PC-3 (cell line): ENCODE measurements at regions of chr1 and their contacts with region 1.

Region 1: DNA sequence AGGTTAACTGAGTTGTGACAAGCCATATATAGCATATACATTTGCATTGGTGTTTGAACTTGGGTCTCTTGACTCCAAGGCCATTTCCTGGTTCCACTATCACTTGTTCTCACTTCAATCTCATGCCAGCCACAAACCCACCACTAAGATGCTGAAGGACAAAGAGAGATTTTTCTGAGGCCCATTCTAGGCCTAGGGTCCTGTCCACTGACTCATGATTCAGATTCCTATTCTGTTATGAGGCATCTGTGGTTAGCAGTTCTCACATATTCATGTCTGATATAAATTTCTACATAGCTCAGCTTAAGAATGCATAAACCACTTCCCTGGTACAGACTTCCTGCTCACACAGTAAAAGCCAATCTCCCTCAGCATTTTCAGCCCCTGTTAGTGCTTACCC is 326.1 kb upstream of the BEND5 start:
- DNase-seq: peak; percentile 83
- ATAC-seq: peak; percentile 79
- H3K4me3 ChIP-seq: no peak overlapping the region
- H3K27ac ChIP-seq: peak overlapping the region; percentile 52
- H3K4me1 ChIP-seq: peaks cover 40% of the 10 kb centered on the region
- H3K27me3 ChIP-seq: no peaks in the 10 kb centered on the region
- CTCF ChIP-seq: no peak

Region 2: DNA sequence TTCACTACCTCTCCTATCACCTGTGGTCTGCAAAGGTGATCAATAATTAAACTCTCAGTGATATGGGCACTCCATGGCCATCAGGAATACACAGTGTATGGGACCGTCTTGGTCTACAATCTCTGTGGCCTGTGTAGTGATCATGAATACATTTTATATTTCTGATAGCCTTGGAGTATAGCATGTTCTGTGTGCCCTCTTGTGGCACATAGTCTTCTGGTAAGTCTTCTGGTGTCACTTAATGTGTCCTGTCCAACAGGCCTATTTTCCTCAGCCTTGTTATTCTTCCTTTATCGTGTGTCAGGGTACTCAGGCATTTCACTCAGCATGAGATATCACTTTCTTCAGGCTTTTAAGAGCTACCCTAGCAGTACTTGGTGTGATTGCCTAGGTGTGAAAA is 527.4 kb after region 1 on chr1:
- CTCF ChIA-PET with region 1: no interaction called
- POLR2A ChIA-PET with region 1: no interaction called
- intact Hi-C with region 1: loop called (anchors 5 kb)
- DNase-seq: peak; percentile 45
- ATAC-seq: peak; percentile 76
- H3K4me3 ChIP-seq: no peak overlapping the region
- H3K27ac ChIP-seq: no peak overlapping the region
- H3K4me1 ChIP-seq: no peaks in the 10 kb centered on the region; the same call in 1 of the 2 replicates
- H3K27me3 ChIP-seq: no peaks in the 10 kb centered on the region
- CTCF ChIP-seq: peak; percentile 66